ENCODE measurements at regions of chr10 and their contacts with region 1.

Region 1: GRCh38 chr10:50624866-50625692 is 1.3 kb upstream of the SGMS1 start:
- DNase-seq: peak; percentile 62
- H3K4me3 Mint-ChIP-seq: peak overlapping the region; percentile 88
- H3K27ac Mint-ChIP-seq: peak overlapping the region; percentile 91
- H3K4me1 Mint-ChIP-seq: peaks cover 30% of the 10 kb centered on the region
- H3K27me3 Mint-ChIP-seq: no peaks in the 10 kb centered on the region

Region 2: DNA sequence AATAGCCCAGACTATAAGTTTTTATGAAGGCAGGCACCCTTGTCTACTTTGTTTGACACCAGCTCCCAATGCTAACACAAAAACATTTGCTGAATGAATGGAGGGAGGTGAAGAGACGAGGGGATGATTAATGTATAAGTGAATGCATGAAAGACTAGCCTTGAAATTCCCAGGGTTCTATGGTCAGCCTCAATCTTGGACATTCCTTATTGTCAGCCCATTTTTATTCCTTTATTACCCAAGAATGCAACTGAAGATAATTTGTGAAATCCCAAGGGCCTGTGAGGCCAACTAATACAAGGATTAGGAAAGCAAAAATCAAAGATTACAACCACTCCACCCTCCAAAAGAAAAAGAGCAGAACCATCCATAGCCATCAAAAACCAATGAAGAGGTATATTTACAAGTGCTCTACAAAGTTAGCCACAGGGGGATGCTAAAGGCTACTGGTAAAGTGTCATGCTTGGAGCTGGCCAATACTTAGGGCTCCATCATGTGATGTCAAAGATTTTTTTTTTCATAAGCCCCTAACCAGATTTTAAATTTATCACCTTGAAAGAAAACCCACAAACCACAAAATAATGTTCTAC is 333.7 kb before region 1 on chr10:
- CTCF ChIA-PET with region 1: no interaction called
- intact Hi-C with region 1: loop called (anchors 10 kb)
- DNase-seq: no peak
- H3K4me3 Mint-ChIP-seq: no peak overlapping the region
- H3K27ac Mint-ChIP-seq: no peak overlapping the region
- H3K4me1 Mint-ChIP-seq: no peaks in the 10 kb centered on the region
- H3K27me3 Mint-ChIP-seq: no peaks in the 10 kb centered on the region

Region 3: DNA sequence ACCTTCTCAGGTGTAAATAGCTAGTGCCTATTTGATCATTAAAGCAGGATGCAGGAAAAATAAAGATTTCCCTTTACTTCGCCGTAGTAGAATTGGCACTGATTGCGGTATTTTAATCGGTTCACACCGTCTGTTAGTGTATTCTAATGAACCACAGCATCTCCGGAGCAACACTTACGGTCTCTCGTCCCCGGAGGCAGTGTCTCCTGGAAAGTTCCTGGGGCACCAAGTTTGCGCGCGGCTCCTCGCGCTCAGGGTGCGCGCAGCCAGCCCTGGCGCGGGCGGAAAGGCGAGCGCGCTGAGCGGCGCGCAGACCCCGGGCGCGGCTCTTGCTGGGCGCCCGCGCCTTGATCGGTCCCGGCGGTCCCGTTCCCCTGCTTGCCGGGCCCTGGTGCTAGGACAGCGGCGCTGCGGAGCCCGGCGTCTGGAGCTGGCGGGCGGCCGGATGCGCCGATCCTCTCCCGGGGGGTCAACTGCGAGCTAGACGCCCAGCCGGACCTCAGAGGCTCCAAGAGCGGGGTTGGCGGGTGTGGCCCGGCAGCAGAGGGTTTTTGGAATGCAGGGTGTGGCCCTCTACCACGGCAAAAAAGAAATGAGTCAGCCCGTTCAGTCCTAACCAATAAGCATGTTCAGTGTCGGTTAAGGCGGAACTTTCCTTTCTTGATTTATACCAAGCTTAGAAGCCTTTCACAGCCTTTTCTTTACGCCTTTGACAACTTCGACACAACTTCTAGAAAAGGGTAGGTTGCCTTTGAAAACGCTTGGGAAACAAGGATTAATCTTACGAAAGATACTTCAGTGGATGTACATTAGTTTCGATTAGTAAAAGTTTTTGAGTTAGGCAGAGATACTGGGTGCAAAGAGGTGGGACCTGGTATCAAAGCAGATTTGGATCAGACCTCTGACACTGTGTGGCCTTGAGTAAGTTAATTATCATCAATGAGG is 206.9 kb before region 1 on chr10:
- CTCF ChIA-PET with region 1: interaction called, 3 read pairs
- intact Hi-C with region 1: loop called (anchors 1 kb)
- DNase-seq: peak; percentile 58
- H3K4me3 Mint-ChIP-seq: peak overlapping the region; percentile 81
- H3K27ac Mint-ChIP-seq: no peak overlapping the region
- H3K4me1 Mint-ChIP-seq: peaks cover 23% of the 10 kb centered on the region
- H3K27me3 Mint-ChIP-seq: no peaks in the 10 kb centered on the region

Region 4: GRCh38 chr10:50470345-50470744 is 154.7 kb before region 1 on chr10:
- CTCF ChIA-PET with region 1: no interaction called
- intact Hi-C with region 1: no loop called
- DNase-seq: peak; percentile 15
- H3K4me3 Mint-ChIP-seq: no peak overlapping the region
- H3K27ac Mint-ChIP-seq: no peak overlapping the region
- H3K4me1 Mint-ChIP-seq: peaks cover 44% of the 10 kb centered on the region
- H3K27me3 Mint-ChIP-seq: no peaks in the 10 kb centered on the region

Region 5: GRCh38 chr10:50508315-50509051 is 116.6 kb before region 1 on chr10:
- CTCF ChIA-PET with region 1: no interaction called
- intact Hi-C with region 1: no loop called
- DNase-seq: peak; percentile 13
- H3K4me3 Mint-ChIP-seq: no peak overlapping the region
- H3K27ac Mint-ChIP-seq: no peak overlapping the region
- H3K4me1 Mint-ChIP-seq: peaks cover 49% of the 10 kb centered on the region
- H3K27me3 Mint-ChIP-seq: no peaks in the 10 kb centered on the region

Region 6: DNA sequence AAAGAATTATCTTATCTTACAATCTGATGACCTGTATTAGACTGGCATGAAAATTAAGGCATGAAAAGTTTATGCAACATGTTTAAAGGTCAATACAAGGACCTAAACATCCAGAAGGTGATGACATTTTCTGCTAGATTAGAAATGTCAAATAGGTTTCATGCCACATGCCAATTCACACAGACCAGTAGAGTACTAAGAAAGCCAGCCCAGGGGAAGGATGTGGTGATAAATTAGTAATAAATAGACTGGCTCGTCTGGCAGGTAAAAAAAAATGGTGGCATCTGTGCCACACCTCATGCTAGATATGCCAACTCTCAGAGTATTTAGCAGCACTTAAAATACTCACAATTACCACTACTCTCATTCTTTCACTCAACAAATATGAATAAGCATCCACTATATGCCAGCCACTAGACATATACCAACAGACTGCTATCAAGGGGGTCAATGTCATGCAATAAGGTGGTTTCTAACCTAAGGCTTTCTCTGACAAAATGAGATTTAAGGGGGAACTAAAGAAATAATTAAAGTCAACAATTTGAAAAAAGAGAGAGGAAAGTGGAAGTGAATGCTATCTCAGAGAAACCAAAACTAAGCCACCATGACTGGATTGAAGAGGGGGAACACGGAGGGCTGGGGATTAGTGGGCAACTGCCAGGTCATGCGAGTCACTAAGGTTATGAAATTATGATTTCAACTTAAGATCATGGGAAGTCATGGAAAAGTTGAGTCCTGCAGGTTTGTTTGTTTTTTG is 84.8 kb before region 1 on chr10:
- CTCF ChIA-PET with region 1: no interaction called
- intact Hi-C with region 1: loop called (anchors 1 kb)
- DNase-seq: peak; percentile 70
- H3K4me3 Mint-ChIP-seq: peak overlapping the region; percentile 57
- H3K27ac Mint-ChIP-seq: peak overlapping the region; percentile 89
- H3K4me1 Mint-ChIP-seq: peaks cover 86% of the 10 kb centered on the region
- H3K27me3 Mint-ChIP-seq: no peaks in the 10 kb centered on the region

Region 7: GRCh38 chr10:50561816-50562215 is 63.3 kb before region 1 on chr10:
- CTCF ChIA-PET with region 1: interaction called, 3 read pairs
- intact Hi-C with region 1: loop called (anchors 1 kb)
- DNase-seq: no peak
- H3K4me3 Mint-ChIP-seq: no peak overlapping the region
- H3K27ac Mint-ChIP-seq: no peak overlapping the region
- H3K4me1 Mint-ChIP-seq: peaks cover 16% of the 10 kb centered on the region
- H3K27me3 Mint-ChIP-seq: no peaks in the 10 kb centered on the region

Region 8: DNA sequence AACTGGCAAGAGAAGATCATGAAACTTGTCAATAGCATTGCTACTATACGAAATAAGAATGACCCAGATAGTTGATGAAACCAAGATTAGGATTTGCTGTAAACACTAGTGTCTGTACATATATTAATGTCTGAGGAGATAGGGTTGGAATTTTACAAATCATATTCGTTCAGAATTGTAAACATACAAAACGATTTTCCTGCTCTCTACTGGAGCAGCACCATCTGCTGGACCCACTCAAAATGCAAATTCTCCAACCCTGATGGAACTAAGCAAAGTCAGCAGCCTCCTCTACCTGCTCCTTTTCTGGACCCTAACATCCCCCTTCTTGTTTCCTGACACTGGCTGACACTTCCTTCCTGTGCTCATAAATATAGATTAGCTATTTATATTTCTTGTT is 28.1 kb after region 1 on chr10:
- CTCF ChIA-PET with region 1: interaction called, 5 read pairs
- intact Hi-C with region 1: loop called (anchors 1 kb)
- DNase-seq: peak; percentile 56
- H3K4me3 Mint-ChIP-seq: no peak overlapping the region
- H3K27ac Mint-ChIP-seq: no peak overlapping the region
- H3K4me1 Mint-ChIP-seq: peaks cover 13% of the 10 kb centered on the region
- H3K27me3 Mint-ChIP-seq: peaks cover 2% of the 10 kb centered on the region

Region 9: DNA sequence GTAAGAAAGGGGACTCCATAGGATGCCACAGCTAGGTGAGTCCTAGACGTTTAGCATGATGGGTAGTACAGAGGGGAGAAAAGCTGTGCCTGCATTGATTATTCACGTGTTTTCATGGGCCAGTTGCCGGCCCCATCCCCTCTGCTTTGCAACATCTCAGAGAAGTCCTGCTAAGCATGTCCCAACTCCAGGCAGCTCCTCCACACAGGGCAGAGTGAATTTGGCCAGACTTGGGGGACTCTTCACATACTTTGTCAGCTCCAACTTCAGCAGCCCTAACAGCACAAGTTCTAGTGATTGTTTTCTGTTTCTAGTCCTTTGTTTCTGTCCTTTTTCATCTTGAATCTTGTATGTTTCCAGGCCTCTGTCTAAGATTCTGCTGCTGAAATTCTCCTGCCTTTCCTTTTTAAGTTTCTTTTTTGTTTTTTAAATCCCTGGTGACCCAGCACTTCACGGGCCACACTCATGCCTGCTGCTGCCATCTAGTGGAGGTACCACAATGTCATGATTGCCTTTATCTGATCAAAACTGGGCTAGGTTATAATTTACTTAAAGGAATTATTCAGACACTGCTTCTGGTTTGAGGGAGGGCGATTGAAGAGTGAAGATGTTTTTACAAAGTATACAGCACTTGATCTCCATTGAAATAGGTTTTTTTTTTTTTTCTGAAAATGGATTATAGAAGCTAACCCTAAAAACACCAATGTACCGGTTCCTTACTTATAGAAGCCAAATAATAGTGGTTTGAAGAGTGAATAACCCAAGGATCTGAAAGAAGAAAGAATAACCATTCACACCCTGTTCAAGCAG is 797.4 kb after region 1 on chr10:
- CTCF ChIA-PET with region 1: no interaction called
- intact Hi-C with region 1: no loop called
- DNase-seq: peak; percentile 52
- H3K4me3 Mint-ChIP-seq: no peak overlapping the region
- H3K27ac Mint-ChIP-seq: no peak overlapping the region
- H3K4me1 Mint-ChIP-seq: no peaks in the 10 kb centered on the region
- H3K27me3 Mint-ChIP-seq: peaks cover 11% of the 10 kb centered on the region

Region 10: DNA sequence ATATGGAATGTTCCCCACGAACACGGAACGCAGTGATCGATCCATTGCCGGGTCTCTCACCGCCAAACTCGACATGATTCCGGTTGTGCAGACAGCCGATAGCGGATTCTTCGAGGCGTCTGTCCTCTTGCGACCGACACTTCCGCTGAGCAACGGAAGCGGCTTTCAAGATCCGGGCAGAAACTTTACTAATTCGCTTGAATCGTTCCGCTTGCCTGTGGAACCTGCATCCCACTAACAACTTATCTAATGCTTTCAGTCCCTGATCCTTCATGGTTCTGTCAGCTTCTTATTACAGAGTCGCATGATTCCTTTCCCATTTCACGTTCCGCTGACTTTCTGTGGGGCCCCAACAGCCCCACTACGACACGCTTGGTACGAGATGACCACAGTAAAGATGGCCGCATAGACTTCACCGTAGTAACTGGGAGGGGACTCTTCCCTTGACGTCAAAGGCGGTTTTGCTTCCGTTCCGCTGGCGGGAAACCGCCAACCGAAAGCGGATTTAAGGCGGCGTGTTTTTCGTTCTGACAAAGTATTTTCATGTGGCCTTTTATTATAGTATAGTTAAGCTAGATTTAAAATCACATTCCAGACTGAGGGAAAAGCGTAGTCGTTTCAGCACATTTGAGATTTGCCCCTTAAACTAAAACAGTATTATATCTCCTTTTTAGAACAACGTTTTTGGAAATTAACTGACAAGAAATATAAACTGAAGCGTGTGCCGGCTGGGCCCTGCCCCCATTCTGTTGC is 1074.6 kb after region 1 on chr10 and contains the start of gene CSTF2T:
- CTCF ChIA-PET with region 1: no interaction called
- intact Hi-C with region 1: loop called (anchors 1 kb)
- DNase-seq: peak; percentile 94
- H3K4me3 Mint-ChIP-seq: peak within 1 kb of the TSS; percentile 97
- H3K27ac Mint-ChIP-seq: peak within 1 kb of the TSS; percentile 100
- H3K4me1 Mint-ChIP-seq: peaks cover 45% of the 10 kb centered on the region
- H3K27me3 Mint-ChIP-seq: no peaks in the 10 kb centered on the region
- total RNA-seq, gene CSTF2T: 25.3 to 25.6 TPM